Left cardiac atrium (tissue), 4 donors: ENCODE measurements at regions of chr3 and their contacts with region 1.

Region 1: DNA sequence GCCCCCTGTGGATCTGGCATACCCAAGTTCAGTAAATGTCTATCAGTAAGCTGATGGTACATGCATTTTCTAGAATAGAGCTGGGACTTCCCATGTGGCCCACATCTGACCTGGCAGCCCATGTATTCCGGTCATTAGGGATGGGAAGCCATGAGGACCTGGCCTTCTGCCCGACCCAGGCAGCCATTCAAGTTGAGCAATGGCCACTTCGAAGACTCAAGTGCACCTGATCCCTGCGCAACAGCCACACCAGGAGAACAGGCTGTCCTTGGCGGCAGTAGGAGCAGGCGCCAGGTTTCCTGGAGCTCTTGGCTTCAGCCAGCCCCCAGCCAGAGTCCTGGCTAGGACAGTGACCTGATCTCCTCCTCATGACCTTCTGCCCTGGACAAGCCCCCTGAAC is 14.6 kb downstream of the HEMK1 start:
- DNase-seq: peak; percentile 86
- ATAC-seq: peak; percentile 68 to 79

Region 2: GRCh38 chr3:50599716-50600131 is 15.8 kb after region 1 on chr3:
- intact Hi-C with region 1: loop called in 1 of 2 experiments (anchors 2 kb)
- DNase-seq: no peak
- ATAC-seq: no peak

Region 3: GRCh38 chr3:50648313-50648712 is 64.4 kb after region 1 on chr3:
- intact Hi-C with region 1: no loop called
- DNase-seq: no peak
- ATAC-seq: no peak